Activated CD8-positive, alpha-beta T cell treated with anti-CD3 and anti-CD28 coated beads for 36 hours (primary cell): ENCODE measurements at regions of chr7 and their contacts with region 1.

Region 1: GRCh38 chr7:104923010-104923421 is 91.0 kb upstream of the KMT2E start:
- DNase-seq: peak; percentile 91
- ATAC-seq: peak; percentile 99
- H3K4me3 Mint-ChIP-seq: no peak overlapping the region
- H3K27ac Mint-ChIP-seq: peak overlapping the region; percentile 52
- H3K4me1 Mint-ChIP-seq: peaks cover 4% of the 10 kb centered on the region
- H3K27me3 Mint-ChIP-seq: no peaks in the 10 kb centered on the region
- CTCF ChIP-seq: peak; percentile 77

Region 2: GRCh38 chr7:104231054-104232046 is 691.7 kb before region 1 on chr7:
- CTCF ChIA-PET with region 1: interaction called, 17 read pairs
- POLR2A ChIA-PET with region 1: no interaction called
- intact Hi-C with region 1: no loop called
- DNase-seq: peak; percentile 57
- ATAC-seq: peak; percentile 85
- H3K4me3 Mint-ChIP-seq: no peak overlapping the region
- H3K27ac Mint-ChIP-seq: no peak overlapping the region
- H3K4me1 Mint-ChIP-seq: no peaks in the 10 kb centered on the region
- H3K27me3 Mint-ChIP-seq: peaks cover 11% of the 10 kb centered on the region
- CTCF ChIP-seq: peak; percentile 85

Region 3: DNA sequence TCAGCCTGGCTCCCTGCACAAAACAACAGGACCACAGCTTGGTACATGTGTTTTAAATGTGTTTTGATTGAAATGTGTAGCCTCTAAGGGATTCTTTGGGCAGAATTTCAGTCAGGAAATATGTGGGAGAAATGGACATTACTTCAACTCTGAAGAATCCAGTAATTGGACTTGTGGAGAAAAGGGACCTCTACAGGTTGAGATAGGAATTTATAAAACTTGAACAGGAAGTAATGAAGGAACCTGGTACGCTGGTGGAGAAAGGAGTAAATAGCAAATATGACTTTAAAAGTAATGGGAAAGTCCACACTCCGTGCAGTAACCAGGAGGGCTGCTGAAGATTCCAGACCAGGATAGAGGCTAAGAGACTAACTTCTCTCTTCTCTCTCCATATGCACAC is 374.1 kb before region 1 on chr7:
- CTCF ChIA-PET with region 1: no interaction called
- POLR2A ChIA-PET with region 1: no interaction called
- intact Hi-C with region 1: no loop called
- DNase-seq: no peak
- ATAC-seq: no peak
- H3K4me3 Mint-ChIP-seq: no peak overlapping the region
- H3K27ac Mint-ChIP-seq: no peak overlapping the region
- H3K4me1 Mint-ChIP-seq: no peaks in the 10 kb centered on the region
- H3K27me3 Mint-ChIP-seq: no peaks in the 10 kb centered on the region
- CTCF ChIP-seq: no peak

Region 4: DNA sequence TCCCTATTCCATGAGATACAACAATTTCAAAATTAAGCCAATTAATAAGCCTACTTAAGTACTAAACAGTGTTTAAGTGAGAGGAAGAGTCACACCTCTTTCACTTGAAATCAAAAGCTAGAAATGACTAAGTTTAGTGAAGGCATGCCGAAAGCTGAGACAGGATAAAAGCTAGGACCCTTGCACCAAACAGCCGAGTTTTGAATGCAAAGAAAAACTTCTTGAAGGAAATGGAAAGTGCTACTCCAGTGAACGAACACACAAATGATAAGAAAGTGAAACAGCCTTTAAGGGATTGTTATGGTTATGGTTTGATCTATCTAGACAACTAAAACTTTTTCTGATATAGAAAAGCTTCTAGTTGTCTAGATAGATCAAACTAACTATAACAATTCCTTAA is 44.4 kb before region 1 on chr7:
- CTCF ChIA-PET with region 1: interaction called, 162 read pairs
- POLR2A ChIA-PET with region 1: no interaction called
- intact Hi-C with region 1: no loop called
- DNase-seq: no peak
- ATAC-seq: peak; percentile 82
- H3K4me3 Mint-ChIP-seq: no peak overlapping the region
- H3K27ac Mint-ChIP-seq: no peak overlapping the region
- H3K4me1 Mint-ChIP-seq: peaks cover 7% of the 10 kb centered on the region
- H3K27me3 Mint-ChIP-seq: peaks cover 1% of the 10 kb centered on the region
- CTCF ChIP-seq: no peak

Region 5: GRCh38 chr7:104895522-104896236 is 27.3 kb before region 1 on chr7:
- CTCF ChIA-PET with region 1: interaction called, 13 read pairs
- POLR2A ChIA-PET with region 1: no interaction called
- intact Hi-C with region 1: no loop called
- DNase-seq: no peak
- ATAC-seq: no peak
- H3K4me3 Mint-ChIP-seq: no peak overlapping the region
- H3K27ac Mint-ChIP-seq: no peak overlapping the region
- H3K4me1 Mint-ChIP-seq: peaks cover 6% of the 10 kb centered on the region
- H3K27me3 Mint-ChIP-seq: peaks cover 2% of the 10 kb centered on the region
- CTCF ChIP-seq: no peak

Region 6: GRCh38 chr7:104900525-104901239 is 22.3 kb before region 1 on chr7:
- CTCF ChIA-PET with region 1: interaction called, 12 read pairs
- POLR2A ChIA-PET with region 1: no interaction called
- intact Hi-C with region 1: no loop called
- DNase-seq: no peak
- ATAC-seq: no peak
- H3K4me3 Mint-ChIP-seq: no peak overlapping the region
- H3K27ac Mint-ChIP-seq: no peak overlapping the region
- H3K4me1 Mint-ChIP-seq: peaks cover 6% of the 10 kb centered on the region
- H3K27me3 Mint-ChIP-seq: peaks cover 4% of the 10 kb centered on the region
- CTCF ChIP-seq: no peak

Region 7: GRCh38 chr7:104908636-104909035 is 14.4 kb before region 1 on chr7:
- CTCF ChIA-PET with region 1: interaction called, 16 read pairs
- POLR2A ChIA-PET with region 1: interaction called, 3 read pairs
- intact Hi-C with region 1: no loop called
- DNase-seq: no peak
- ATAC-seq: no peak
- H3K4me3 Mint-ChIP-seq: no peak overlapping the region
- H3K27ac Mint-ChIP-seq: no peak overlapping the region
- H3K4me1 Mint-ChIP-seq: no peaks in the 10 kb centered on the region
- H3K27me3 Mint-ChIP-seq: peaks cover 5% of the 10 kb centered on the region
- CTCF ChIP-seq: no peak

Region 8: GRCh38 chr7:105060437-105060836 is 137.4 kb after region 1 on chr7:
- CTCF ChIA-PET with region 1: no interaction called
- POLR2A ChIA-PET with region 1: no interaction called
- intact Hi-C with region 1: loop called (anchors 5 kb)
- DNase-seq: no peak
- ATAC-seq: peak; percentile 10
- H3K4me3 Mint-ChIP-seq: no peak overlapping the region
- H3K27ac Mint-ChIP-seq: peak overlapping the region; percentile 16
- H3K4me1 Mint-ChIP-seq: peaks cover 70% of the 10 kb centered on the region
- H3K27me3 Mint-ChIP-seq: no peaks in the 10 kb centered on the region
- CTCF ChIP-seq: no peak